Activated naive CD4-positive, alpha-beta T cell treated with anti-CD3 and anti-CD28 coated beads for 36 hours (primary cell): ENCODE measurements at regions of chr14 and their contacts with region 1.

Region 1: GRCh38 chr14:76977793-76978720 is 50.5 kb downstream of the IRF2BPL start:
- DNase-seq: peak; percentile 97
- H3K4me3 Mint-ChIP-seq: peak overlapping the region; percentile 71
- H3K27ac Mint-ChIP-seq: peak overlapping the region; percentile 95
- H3K4me1 Mint-ChIP-seq: peaks cover 28% of the 10 kb centered on the region
- H3K27me3 Mint-ChIP-seq: no peaks in the 10 kb centered on the region

Region 2: GRCh38 chr14:76773188-76773885 is 204.7 kb before region 1 on chr14:
- CTCF ChIA-PET with region 1: no interaction called
- intact Hi-C with region 1: no loop called
- DNase-seq: peak; percentile 23
- H3K4me3 Mint-ChIP-seq: no peak overlapping the region
- H3K27ac Mint-ChIP-seq: no peak overlapping the region
- H3K4me1 Mint-ChIP-seq: peaks cover 13% of the 10 kb centered on the region
- H3K27me3 Mint-ChIP-seq: peaks cover 6% of the 10 kb centered on the region

Region 3: GRCh38 chr14:76929927-76930326 is 48.1 kb before region 1 on chr14:
- CTCF ChIA-PET with region 1: no interaction called
- intact Hi-C with region 1: loop called (anchors 1 kb)
- DNase-seq: peak; percentile 85
- H3K4me3 Mint-ChIP-seq: peak overlapping the region; percentile 58
- H3K27ac Mint-ChIP-seq: peak overlapping the region; percentile 72
- H3K4me1 Mint-ChIP-seq: peaks cover 70% of the 10 kb centered on the region
- H3K27me3 Mint-ChIP-seq: no peaks in the 10 kb centered on the region

Region 4: DNA sequence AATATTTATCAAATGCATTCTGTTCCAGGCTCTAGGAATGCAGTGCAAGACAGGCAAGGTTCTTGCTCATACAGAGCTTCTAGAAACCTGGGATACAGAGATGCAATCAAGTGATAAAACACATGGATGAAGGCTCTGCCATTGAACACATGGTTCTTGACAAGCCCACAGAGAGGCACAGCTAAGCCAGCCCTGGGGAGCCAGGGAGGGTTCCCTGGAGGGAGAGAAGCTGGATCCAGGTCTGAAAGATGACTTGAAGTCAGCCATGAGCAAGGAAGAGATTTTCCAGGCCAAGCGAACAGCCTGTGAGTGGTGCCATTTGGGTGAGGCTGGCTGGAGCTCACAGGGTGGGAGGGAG is 15.8 kb before region 1 on chr14:
- CTCF ChIA-PET with region 1: interaction called, 13 read pairs
- intact Hi-C with region 1: loop called (anchors 1 kb)
- DNase-seq: no peak
- H3K4me3 Mint-ChIP-seq: peak overlapping the region; percentile 68
- H3K27ac Mint-ChIP-seq: peak overlapping the region; percentile 98
- H3K4me1 Mint-ChIP-seq: peaks cover 90% of the 10 kb centered on the region
- H3K27me3 Mint-ChIP-seq: no peaks in the 10 kb centered on the region

Region 5: DNA sequence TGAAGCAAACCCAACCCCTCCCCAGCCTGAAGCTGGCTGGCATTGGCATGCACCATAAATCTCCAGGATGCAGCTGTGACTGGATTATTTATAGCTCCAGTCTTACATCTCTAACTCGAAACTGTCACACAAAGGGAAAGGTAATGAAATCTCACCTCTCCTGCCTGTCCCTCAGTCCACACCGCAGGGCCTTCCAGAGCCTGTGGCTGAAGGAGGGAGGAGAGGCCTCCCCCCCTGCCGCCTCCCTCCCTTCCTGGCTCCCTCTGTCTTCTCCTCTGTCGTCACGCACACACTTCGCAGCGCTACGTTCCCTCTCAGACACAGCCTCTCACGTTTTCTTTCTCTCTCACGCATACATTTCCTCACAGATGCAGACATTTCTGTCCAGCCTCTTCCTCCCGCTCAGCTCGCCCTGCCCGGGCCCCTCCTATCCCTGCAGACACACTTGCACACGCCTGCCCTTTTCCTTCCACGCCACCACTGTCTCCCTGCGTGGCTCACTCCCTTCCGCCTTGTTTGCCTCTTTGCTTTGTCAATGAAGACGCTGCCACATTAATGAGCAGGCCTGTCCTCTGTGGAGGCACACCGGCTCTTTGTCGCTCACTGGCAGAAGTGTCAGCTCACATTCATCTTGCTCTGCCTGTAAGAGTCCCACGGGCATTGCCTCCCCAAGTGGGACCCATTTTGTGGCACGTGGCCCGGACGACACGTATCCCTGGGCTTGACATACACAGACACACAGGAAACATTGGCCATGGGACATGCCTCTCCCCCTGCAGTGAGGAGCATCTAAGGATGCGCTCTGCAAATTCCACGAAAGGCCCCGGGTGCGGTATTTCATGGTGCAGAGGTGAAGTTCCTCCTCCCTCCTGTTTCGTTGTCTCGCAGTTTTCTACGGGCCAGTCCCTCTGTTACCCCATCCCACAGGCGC is 22.5 kb after region 1 on chr14:
- CTCF ChIA-PET with region 1: interaction called, 3 read pairs
- intact Hi-C with region 1: loop called (anchors 2 kb)
- DNase-seq: peak; percentile 54
- H3K4me3 Mint-ChIP-seq: peak overlapping the region; percentile 4
- H3K27ac Mint-ChIP-seq: no peak overlapping the region
- H3K4me1 Mint-ChIP-seq: peaks cover 18% of the 10 kb centered on the region
- H3K27me3 Mint-ChIP-seq: no peaks in the 10 kb centered on the region